ENCODE measurements at regions of chr19 and their contacts with region 1.

Region 1: DNA sequence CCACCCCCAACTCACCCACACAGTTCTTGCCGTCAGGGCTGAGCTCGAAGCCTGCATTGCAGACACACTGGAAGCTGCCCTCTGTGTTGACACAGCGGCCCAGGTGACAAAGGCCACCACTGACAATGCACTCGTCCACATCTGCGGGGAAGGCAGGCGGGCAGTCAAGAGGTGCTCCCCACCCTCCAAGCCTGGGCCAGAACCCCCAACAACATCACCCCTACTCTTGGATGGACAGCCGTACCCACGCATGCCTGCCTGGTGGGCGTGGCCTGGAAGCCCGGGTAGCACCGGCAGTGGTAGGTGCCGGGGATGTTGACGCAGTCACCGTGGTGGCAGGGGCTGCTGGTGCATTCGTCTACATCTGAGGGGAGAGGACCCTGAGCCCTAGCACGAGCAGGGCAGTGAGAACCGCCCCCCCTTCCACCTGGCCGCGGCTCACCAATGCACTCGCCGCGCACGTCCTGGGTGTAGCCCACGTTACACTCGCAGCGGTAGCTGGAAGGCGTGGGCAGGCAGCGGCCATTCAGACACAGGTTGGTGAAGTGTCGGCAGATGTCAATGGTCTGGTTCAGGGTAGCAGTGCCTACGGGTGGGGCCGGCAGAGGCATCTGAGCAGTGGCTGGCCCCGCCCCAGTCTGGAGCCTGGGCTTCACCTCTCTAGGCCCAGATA is 13.3 kb downstream of the FBN3 start:
- DNase-seq: no peak
- ATAC-seq: peak in 2 of 4 donors; percentile 30 to 35
- H3K4me3 ChIP-seq: no peak overlapping the region
- H3K27ac ChIP-seq: no peak overlapping the region
- H3K4me1 ChIP-seq: no peaks in the 10 kb centered on the region
- H3K27me3 ChIP-seq: no peaks in the 10 kb centered on the region
- CTCF ChIP-seq: no peak
- POLR2A ChIP-seq: no peak

Region 2: DNA sequence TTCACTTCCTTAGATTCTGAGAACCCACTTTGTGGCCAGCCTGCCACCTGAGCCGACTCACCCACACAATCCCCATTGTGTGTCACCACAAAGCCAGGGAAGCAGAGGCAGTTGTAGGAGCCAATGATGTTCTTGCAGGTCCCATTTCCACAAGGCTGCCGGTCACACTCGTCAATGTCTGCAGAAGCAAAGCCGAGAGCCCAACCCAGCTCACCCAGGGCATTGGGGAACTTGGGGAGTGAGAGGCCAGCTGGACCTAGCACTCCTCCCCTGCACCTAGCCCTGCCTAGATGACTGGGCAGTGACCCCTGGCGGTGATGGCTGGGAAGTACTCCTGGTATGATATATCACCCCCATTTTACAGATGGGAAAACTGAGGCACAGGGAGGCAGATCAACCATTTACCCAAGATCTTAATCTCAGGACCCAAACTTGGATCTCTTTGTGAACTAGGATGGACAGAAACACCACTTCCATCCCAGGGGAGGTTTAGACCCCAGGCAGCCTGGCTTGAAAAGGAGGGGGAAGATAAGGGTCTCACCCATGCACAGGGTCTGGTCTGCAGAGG is 40.1 kb before region 1 on chr19:
- intact Hi-C with region 1: loop called in 1 of 2 experiments (anchors 2 kb)
- DNase-seq: no peak
- ATAC-seq: no peak
- H3K4me3 ChIP-seq: no peak overlapping the region
- H3K27ac ChIP-seq: no peak overlapping the region
- H3K4me1 ChIP-seq: no peaks in the 10 kb centered on the region
- H3K27me3 ChIP-seq: no peaks in the 10 kb centered on the region
- CTCF ChIP-seq: no peak
- POLR2A ChIP-seq: no peak

Measured in right lobe of liver (tissue), 6 donors.